ENCODE measurements at regions of chr15 and their contacts with region 1.

Region 1: GRCh38 chr15:54197995-54198394 is 219.8 kb downstream of the UNC13C start:
- DNase-seq: no peak
- H3K4me3 ChIP-seq: no peak overlapping the region
- H3K27ac ChIP-seq: no peak overlapping the region
- H3K4me1 ChIP-seq: no peaks in the 10 kb centered on the region
- H3K27me3 ChIP-seq: no peaks in the 10 kb centered on the region
- CTCF ChIP-seq: no peak
- POLR2A ChIP-seq: no peak

Region 2: DNA sequence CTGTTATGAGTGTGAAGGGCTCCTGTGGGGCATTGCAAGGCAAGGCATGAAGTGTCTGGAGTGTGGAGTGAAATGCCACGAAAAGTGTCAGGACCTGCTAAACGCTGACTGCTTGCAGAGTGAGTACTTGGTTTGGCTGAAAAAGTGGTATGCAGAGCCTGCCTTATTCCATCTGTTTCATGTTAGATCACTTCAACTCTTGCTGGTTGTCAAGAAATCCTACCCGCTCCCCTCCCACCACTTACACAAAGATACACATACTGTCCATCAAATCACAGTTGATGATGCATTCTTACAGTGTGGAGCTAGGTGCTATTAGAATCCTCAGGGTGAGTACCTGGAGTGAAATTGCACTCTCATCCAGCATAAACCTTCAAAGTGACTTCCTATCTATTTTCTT is 52.3 kb after region 1 on chr15:
- intact Hi-C with region 1: loop called (anchors 10 kb)
- DNase-seq: no peak
- H3K4me3 ChIP-seq: no peak overlapping the region
- H3K27ac ChIP-seq: no peak overlapping the region
- H3K4me1 ChIP-seq: no peaks in the 10 kb centered on the region
- H3K27me3 ChIP-seq: no peaks in the 10 kb centered on the region
- CTCF ChIP-seq: no peak
- POLR2A ChIP-seq: no peak

Measured in spleen (tissue), 13 donors.